OCI-LY7 (cell line): ENCODE measurements at regions of chrX and their contacts with region 1.

Region 1: DNA sequence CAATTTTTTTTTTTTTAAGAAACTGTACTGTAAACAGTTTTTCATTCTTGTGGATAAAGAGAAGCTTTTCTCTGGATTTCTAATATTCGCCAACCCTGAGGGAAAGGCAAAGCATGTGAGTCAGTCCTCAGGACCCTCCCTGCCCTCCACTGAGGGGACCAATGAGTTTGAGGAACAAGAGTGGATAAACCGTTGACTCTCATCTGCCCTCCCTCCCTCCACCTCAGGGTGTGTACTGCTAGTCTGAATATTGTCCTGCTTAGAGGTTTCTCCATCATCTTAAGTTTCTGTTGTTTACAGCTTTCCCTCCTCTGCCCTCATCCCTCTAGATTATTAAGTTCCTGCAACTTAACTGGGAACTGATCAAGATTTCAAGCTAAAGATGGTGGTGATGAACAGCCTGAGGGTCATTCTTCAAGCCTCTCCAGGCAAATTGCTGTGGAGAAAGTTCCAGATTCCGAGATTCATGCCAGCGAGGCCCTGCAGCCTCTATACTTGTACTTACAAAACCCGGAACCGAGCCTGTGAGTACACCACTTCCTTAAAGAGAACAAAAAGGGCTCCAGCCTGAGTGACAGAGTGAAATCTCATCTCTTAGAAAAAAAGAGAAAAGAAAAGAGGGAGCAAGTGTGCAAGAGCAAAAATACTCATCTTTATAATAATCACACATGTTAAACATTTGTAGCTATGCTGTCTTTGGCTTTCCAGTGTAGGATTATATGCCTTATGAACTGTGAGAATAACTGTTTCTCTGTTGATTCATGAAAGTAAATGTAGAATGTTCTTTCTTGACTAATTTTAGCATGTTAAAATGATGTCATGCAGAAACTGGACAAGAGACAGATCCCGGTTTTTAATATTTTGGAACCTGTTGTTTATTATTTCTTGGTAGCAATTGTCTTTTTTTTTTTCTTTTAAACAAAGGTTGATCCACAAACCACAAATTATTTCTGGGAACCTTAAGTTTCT is 11.9 kb downstream of the CA5B start:
- DNase-seq: peak; percentile 61
- H3K4me3 ChIP-seq: no peak overlapping the region
- H3K27ac ChIP-seq: peak overlapping the region; percentile 11
- H3K4me1 ChIP-seq: peaks cover 13% of the 10 kb centered on the region
- CTCF ChIP-seq: no peak

Region 2: GRCh38 chrX:15645258-15645657 is 104.7 kb before region 1 on chrX:
- CTCF ChIA-PET with region 1: no interaction called
- POLR2A ChIA-PET with region 1: no interaction called
- intact Hi-C with region 1: no loop called
- DNase-seq: no peak
- H3K4me3 ChIP-seq: no peak overlapping the region
- H3K27ac ChIP-seq: no peak overlapping the region
- H3K4me1 ChIP-seq: no peaks in the 10 kb centered on the region
- CTCF ChIP-seq: no peak

Region 3: GRCh38 chrX:15694941-15695451 is 54.9 kb before region 1 on chrX:
- CTCF ChIA-PET with region 1: no interaction called
- POLR2A ChIA-PET with region 1: no interaction called
- intact Hi-C with region 1: no loop called
- DNase-seq: no peak
- H3K4me3 ChIP-seq: no peak overlapping the region
- H3K27ac ChIP-seq: no peak overlapping the region
- H3K4me1 ChIP-seq: no peaks in the 10 kb centered on the region
- CTCF ChIP-seq: no peak

Region 4: GRCh38 chrX:15737960-15738902 is 11.7 kb before region 1 on chrX and contains the start of gene CA5B:
- CTCF ChIA-PET with region 1: interaction called, 4 read pairs
- POLR2A ChIA-PET with region 1: interaction called, 11 read pairs
- intact Hi-C with region 1: no loop called
- DNase-seq: peak; percentile 91
- H3K4me3 ChIP-seq: peak within 1 kb of the TSS; percentile 69
- H3K27ac ChIP-seq: no peak within 1 kb of the TSS
- H3K4me1 ChIP-seq: peaks cover 12% of the 10 kb centered on the region
- CTCF ChIP-seq: no peak
- total RNA-seq, gene CA5B: 0.85 and 3.1 TPM in 2 replicates

Region 5: GRCh38 chrX:15877380-15877779 is 127.5 kb after region 1 on chrX:
- CTCF ChIA-PET with region 1: no interaction called
- POLR2A ChIA-PET with region 1: no interaction called
- intact Hi-C with region 1: no loop called
- DNase-seq: no peak
- H3K4me3 ChIP-seq: no peak overlapping the region
- H3K27ac ChIP-seq: no peak overlapping the region
- H3K4me1 ChIP-seq: no peaks in the 10 kb centered on the region
- CTCF ChIP-seq: no peak